Activated CD4-positive, alpha-beta T cell treated with anti-CD3 and anti-CD28 coated beads, Interleukin-2, amount 10 ng/mL, durations not matched to agents 7 days and 5 days (primary cell): ENCODE measurements at regions of chr11 and their contacts with region 1.

Region 1: GRCh38 chr11:60831143-60831500 is 10.8 kb upstream of the CCDC86 start:
- DNase-seq: peak; percentile 85
- H3K4me3 Mint-ChIP-seq: no peak overlapping the region
- H3K27ac Mint-ChIP-seq: no peak overlapping the region
- H3K4me1 Mint-ChIP-seq: peaks cover 17% of the 10 kb centered on the region
- H3K27me3 Mint-ChIP-seq: peaks cover 8% of the 10 kb centered on the region

Region 2: GRCh38 chr11:60841797-60842667 is 10.9 kb after region 1 on chr11 and contains the start of gene CCDC86:
- CTCF ChIA-PET with region 1: interaction called, 13 read pairs
- POLR2A ChIA-PET with region 1: no interaction called
- DNase-seq: peak; percentile 97
- H3K4me3 Mint-ChIP-seq: peak within 1 kb of the TSS; percentile 84
- H3K27ac Mint-ChIP-seq: peak within 1 kb of the TSS; percentile 97
- H3K4me1 Mint-ChIP-seq: peaks cover 45% of the 10 kb centered on the region
- H3K27me3 Mint-ChIP-seq: no peaks in the 10 kb centered on the region
- total RNA-seq, gene CCDC86: 19.2 to 23.2 TPM